PC-9 (cell line): ENCODE measurements at regions of chr1 and their contacts with region 1.

Region 1: DNA sequence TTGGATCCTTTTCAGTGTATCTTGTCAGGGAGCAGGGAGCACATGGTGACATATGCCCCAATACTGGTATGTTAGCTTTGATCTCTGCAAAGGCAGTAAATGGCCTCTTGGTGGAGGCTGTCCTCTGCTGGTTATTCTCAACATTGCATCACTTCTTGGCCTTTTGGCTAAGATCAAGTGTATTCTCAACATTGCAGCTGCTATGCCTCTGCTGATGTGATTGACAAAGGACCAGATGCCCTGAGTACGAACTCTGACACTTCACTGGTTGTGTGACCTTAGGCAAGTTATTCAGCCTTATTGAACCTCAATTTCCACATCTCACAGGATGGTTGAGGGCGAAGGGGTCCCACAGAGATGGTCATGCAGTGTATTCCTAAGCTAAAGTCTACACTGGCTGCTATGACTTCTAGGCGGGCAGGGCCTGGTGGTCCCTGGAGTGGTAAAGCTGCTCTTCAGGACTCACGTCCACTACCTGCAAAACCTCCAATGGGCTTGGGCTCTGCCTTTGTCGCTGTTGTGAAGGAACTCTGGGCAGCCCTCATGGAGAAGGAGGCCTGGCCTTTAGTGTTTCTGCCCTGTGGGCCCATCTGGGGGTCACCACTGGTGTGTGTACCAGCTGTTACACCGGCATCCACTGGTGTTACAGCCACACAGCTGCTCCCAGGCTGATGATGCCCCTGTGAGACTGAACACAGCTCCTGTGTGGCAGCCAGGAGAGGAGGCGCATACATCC is 64.8 kb downstream of the DNTTIP2 start:
- DNase-seq: peak; percentile 69 to 84
- H3K4me3 ChIP-seq: no peak overlapping the region
- H3K27ac ChIP-seq: peak overlapping the region; percentile 83
- H3K4me1 ChIP-seq: peaks cover 77% of the 10 kb centered on the region
- H3K27me3 ChIP-seq: no peaks in the 10 kb centered on the region
- CTCF ChIP-seq: peak; percentile 98

Region 2: GRCh38 chr1:93437976-93438605 is 376.1 kb before region 1 on chr1:
- CTCF ChIA-PET with region 1: no interaction called
- POLR2A ChIA-PET with region 1: no interaction called
- intact Hi-C with region 1: loop called (anchors 1 kb)
- DNase-seq: peak in 1 of 2 experiments; percentile 70
- H3K4me3 ChIP-seq: no peak overlapping the region
- H3K27ac ChIP-seq: no peak overlapping the region
- H3K4me1 ChIP-seq: peaks cover 14% of the 10 kb centered on the region
- H3K27me3 ChIP-seq: no peaks in the 10 kb centered on the region
- CTCF ChIP-seq: peak; percentile 96

Region 3: GRCh38 chr1:93635614-93636543 is 178.3 kb before region 1 on chr1:
- CTCF ChIA-PET with region 1: interaction called, 47 read pairs
- POLR2A ChIA-PET with region 1: no interaction called
- intact Hi-C with region 1: no loop called
- DNase-seq: no peak
- H3K4me3 ChIP-seq: no peak overlapping the region
- H3K27ac ChIP-seq: no peak overlapping the region
- H3K4me1 ChIP-seq: peaks cover 61% of the 10 kb centered on the region
- H3K27me3 ChIP-seq: no peaks in the 10 kb centered on the region
- CTCF ChIP-seq: no peak

Region 4: GRCh38 chr1:93680757-93681550 is 133.3 kb before region 1 on chr1:
- CTCF ChIA-PET with region 1: no interaction called
- POLR2A ChIA-PET with region 1: interaction called, 4 read pairs
- intact Hi-C with region 1: loop called (anchors 1 kb)
- DNase-seq: peak; percentile 76 to 86
- H3K4me3 ChIP-seq: peak overlapping the region; percentile 80
- H3K27ac ChIP-seq: peak overlapping the region; percentile 81
- H3K4me1 ChIP-seq: peaks cover 69% of the 10 kb centered on the region
- H3K27me3 ChIP-seq: no peaks in the 10 kb centered on the region
- CTCF ChIP-seq: peak; percentile 72

Region 5: DNA sequence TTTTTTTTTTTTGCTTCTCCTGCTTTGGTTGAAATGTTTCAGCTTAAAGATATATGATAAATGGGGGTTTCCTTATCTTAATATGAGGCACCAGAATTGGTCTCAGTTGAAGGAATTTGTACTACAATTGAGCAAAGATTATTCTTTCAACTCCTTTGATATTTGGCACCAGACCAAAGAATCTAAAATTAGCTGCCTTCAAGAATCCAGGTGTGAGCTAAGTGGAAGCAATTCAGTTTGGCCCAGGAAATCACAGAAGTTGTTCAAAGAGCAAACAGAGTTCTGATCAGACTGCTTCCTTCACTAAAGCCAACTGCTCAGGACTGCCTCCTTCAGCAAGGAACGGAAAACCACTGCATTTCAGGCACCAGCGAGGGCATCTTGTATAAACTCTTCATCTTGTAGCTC is 64.3 kb before region 1 on chr1:
- CTCF ChIA-PET with region 1: interaction called, 4 read pairs
- POLR2A ChIA-PET with region 1: interaction called, 4 read pairs
- intact Hi-C with region 1: loop called (anchors 1 kb)
- DNase-seq: peak in 1 of 2 experiments; percentile 82
- H3K4me3 ChIP-seq: no peak overlapping the region
- H3K27ac ChIP-seq: peak overlapping the region; percentile 49
- H3K4me1 ChIP-seq: peaks cover 53% of the 10 kb centered on the region
- H3K27me3 ChIP-seq: no peaks in the 10 kb centered on the region
- CTCF ChIP-seq: no peak; the same call in 1 of the 2 replicates

Region 6: GRCh38 chr1:94247138-94248094 is 433.2 kb after region 1 on chr1:
- CTCF ChIA-PET with region 1: no interaction called
- POLR2A ChIA-PET with region 1: interaction called, 11 read pairs
- intact Hi-C with region 1: no loop called
- DNase-seq: peak; percentile 78 to 93
- H3K4me3 ChIP-seq: peak overlapping the region; percentile 84
- H3K27ac ChIP-seq: peak overlapping the region; percentile 91
- H3K4me1 ChIP-seq: peaks cover 70% of the 10 kb centered on the region
- H3K27me3 ChIP-seq: no peaks in the 10 kb centered on the region
- CTCF ChIP-seq: no peak